ENCODE measurements at regions of chr12 and their contacts with region 1.

Region 1: DNA sequence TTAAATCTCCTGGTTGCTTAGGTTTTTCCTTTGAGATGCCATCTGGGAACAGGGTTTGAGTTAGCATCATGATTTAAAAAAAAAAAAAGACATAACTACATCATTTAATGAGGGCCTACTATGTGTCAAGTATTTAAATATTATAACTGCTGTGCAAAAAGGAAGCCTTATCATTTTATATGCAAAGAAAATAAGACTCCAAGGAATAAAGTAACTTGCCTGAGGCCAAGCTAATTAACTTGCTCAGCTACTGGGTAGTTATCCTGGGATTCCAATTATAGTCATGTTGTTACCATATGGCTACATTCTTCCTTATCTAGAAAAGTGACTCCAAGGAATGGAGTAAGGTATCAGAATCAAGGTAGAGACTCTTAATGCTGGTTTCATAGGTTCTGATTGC is 123.5 kb downstream of the SLC41A2 start:
- DNase-seq: no peak
- CTCF ChIP-seq: no peak

Region 2: GRCh38 chr12:104641862-104642261 is 192.7 kb before region 1 on chr12:
- CTCF ChIA-PET with region 1: no interaction called
- POLR2A ChIA-PET with region 1: no interaction called
- DNase-seq: peak; percentile 80
- CTCF ChIP-seq: peak; percentile 29

Region 3: GRCh38 chr12:104815935-104816334 is 18.7 kb before region 1 on chr12:
- CTCF ChIA-PET with region 1: interaction called, 10 read pairs
- POLR2A ChIA-PET with region 1: no interaction called
- DNase-seq: no peak
- CTCF ChIP-seq: no peak

Region 4: DNA sequence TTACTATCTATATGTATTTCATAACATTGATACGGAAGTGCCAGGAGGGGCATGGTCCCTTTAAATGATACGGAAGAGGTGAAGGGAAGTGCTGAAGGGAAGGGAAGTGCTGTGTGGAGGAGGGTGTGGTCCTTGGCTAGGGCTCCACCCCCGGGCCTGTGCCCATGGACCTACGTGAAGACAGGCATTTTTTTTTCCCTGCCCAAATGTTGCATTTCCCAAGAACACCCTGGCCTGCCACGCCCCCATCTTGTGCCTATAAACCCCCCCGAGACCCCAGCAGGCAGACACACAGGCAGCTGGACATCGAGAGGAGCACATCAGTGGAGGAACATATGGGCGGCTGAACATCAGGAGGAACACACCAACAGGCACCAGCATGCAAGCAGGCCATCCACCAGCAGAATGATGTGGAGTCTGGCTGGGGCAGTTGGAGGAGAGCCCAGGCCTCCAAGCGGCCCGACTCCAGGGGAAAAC is 10.6 kb before region 1 on chr12:
- CTCF ChIA-PET with region 1: interaction called, 11 read pairs
- POLR2A ChIA-PET with region 1: no interaction called
- DNase-seq: no peak
- CTCF ChIP-seq: no peak